GM23248 (cell line): ENCODE measurements at regions of chr3 and their contacts with region 1.

Region 1: DNA sequence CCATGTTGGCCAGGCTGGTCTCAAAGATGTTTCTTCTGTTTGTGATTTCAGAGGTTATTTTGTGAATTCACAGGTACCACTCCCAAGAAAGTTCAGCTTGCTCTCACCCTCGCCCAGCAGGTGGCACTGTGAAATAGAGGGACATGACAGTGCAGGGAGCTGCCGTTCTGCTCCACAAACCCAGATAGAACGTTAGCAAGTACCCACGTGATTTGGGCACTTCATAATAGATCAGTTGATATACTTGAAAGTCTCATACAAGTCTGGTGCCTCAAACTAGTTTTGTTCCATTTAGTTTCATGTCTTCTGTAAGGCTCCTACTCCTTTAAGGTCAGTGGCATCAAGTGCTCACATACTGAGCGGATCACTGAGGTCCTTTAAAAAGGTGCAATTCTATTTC is 45.5 kb downstream of the FILIP1L start:
- DNase-seq: peak; percentile 84
- H3K4me3 ChIP-seq: no peak overlapping the region
- H3K27ac ChIP-seq: no peak overlapping the region
- H3K4me1 ChIP-seq: peaks cover 8% of the 10 kb centered on the region
- H3K27me3 ChIP-seq: no peaks in the 10 kb centered on the region

Region 2: GRCh38 chr3:100245927-100246326 is 177.1 kb after region 1 on chr3:
- in situ Hi-C with region 1: loop called (anchors 10 kb)
- DNase-seq: peak; percentile 82
- H3K4me3 ChIP-seq: no peak overlapping the region
- H3K27ac ChIP-seq: no peak overlapping the region
- H3K4me1 ChIP-seq: peaks cover 21% of the 10 kb centered on the region
- H3K27me3 ChIP-seq: no peaks in the 10 kb centered on the region

Region 3: GRCh38 chr3:100740207-100740606 is 671.4 kb after region 1 on chr3:
- in situ Hi-C with region 1: no loop called
- DNase-seq: peak; percentile 40
- H3K4me3 ChIP-seq: no peak overlapping the region
- H3K27ac ChIP-seq: no peak overlapping the region
- H3K4me1 ChIP-seq: no peaks in the 10 kb centered on the region
- H3K27me3 ChIP-seq: no peaks in the 10 kb centered on the region